Psoas muscle (tissue), 8 donors: ENCODE measurements at regions of chr1 and their contacts with region 1.

Region 1: DNA sequence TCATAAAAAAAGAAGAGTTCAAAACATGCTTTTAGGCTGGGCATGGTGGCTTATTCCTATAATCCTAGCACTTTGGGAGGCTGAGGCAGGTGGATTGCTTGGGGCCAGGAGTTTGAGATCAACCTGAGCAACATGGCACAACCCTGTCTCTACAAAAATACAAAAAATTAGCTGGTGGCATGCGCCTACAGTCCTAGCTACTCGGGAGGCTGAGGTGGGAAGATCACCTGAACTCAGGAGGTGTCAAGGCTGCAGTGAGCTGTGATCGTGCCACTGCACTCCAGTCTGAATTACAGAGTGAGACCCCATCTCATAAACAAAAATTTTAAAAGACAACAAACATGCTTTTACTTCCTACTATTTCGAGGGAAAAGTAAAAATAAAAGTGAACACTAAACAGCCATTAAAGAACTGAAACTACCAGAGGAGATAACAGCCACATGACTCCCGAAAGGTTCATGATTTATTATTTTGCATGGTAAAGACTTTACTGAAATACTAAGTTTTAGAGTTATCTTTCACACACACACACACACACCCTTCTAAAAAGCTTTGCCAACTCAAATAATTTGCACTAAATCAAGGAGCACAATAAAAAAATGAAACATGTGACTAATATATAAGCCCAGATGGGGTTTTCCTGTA is 48.1 kb downstream of the USP1 start:
- DNase-seq: no peak
- ATAC-seq: no peak
- H3K4me3 ChIP-seq: no peak overlapping the region
- H3K27ac ChIP-seq: no peak overlapping the region
- H3K4me1 ChIP-seq: no peaks in the 10 kb centered on the region
- H3K27me3 ChIP-seq: no peaks in the 10 kb centered on the region
- CTCF ChIP-seq: no peak

Region 2: DNA sequence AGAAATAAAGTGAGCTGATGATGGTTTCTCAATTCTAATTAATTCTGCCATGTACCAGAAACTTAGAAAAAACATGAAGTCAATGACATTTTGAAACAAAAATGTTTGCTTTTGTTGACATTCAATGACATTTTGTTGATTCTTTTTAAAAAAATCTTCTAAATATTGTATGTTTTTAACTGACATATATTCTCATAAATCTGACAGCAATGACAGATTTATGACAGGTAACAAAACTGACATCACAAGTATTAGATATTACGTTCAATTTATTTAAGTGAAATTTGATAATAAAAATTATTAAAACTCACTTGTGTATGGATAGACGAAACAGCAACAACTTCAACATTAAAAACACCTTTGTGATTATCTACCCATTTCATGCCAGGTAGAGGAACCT is 76.4 kb after region 1 on chr1:
- intact Hi-C with region 1: loop called in 1 of 2 experiments (anchors 2 kb)
- DNase-seq: no peak
- ATAC-seq: no peak
- H3K4me3 ChIP-seq: no peak overlapping the region
- H3K27ac ChIP-seq: no peak overlapping the region
- H3K4me1 ChIP-seq: no peaks in the 10 kb centered on the region
- H3K27me3 ChIP-seq: no peaks in the 10 kb centered on the region
- CTCF ChIP-seq: no peak